Activated CD4-positive, alpha-beta T cell treated with anti-CD3 and anti-CD28 coated beads for 36 hours (primary cell): ENCODE measurements at regions of chr22 and their contacts with region 1.

Region 1: DNA sequence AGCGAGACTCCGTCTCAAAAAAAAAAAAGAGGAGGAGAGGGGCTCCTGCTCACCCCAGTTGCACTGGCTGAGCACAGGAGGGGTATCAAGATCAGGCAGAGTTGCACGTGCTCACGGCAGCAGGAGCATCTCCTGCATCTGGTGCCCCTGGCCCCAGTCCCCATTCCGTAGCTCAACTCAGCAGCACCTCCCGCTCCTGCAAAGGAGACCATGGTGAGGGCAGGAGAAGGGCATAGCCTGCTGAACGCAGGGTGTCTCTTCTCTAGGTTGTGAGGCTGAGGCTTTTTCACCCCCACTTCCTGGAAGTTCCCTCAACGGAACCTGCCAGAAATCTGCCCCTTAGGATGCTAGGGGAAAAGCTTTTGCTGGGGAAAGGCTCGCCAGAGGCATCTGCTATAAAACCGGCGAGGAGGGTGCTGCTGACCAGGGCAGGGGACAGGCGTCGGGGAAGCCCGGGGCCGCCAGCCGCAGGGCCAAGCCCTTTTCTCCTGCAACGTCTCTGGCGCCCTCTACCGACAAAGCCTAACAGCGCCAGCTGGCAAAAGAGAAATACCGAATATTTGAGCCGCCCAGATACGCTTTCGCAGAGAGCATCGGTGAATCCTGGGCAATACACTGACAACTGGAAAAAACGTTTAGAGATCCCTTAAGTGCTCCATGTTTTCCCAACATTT is 1.0 kb upstream of the PPP6R2 start:
- DNase-seq: peak; percentile 95
- ATAC-seq: peak; percentile 64
- H3K4me3 Mint-ChIP-seq: peak overlapping the region; percentile 71
- H3K27ac Mint-ChIP-seq: peak overlapping the region; percentile 83
- H3K4me1 Mint-ChIP-seq: peaks cover 7% of the 10 kb centered on the region
- H3K27me3 Mint-ChIP-seq: no peaks in the 10 kb centered on the region

Region 2: DNA sequence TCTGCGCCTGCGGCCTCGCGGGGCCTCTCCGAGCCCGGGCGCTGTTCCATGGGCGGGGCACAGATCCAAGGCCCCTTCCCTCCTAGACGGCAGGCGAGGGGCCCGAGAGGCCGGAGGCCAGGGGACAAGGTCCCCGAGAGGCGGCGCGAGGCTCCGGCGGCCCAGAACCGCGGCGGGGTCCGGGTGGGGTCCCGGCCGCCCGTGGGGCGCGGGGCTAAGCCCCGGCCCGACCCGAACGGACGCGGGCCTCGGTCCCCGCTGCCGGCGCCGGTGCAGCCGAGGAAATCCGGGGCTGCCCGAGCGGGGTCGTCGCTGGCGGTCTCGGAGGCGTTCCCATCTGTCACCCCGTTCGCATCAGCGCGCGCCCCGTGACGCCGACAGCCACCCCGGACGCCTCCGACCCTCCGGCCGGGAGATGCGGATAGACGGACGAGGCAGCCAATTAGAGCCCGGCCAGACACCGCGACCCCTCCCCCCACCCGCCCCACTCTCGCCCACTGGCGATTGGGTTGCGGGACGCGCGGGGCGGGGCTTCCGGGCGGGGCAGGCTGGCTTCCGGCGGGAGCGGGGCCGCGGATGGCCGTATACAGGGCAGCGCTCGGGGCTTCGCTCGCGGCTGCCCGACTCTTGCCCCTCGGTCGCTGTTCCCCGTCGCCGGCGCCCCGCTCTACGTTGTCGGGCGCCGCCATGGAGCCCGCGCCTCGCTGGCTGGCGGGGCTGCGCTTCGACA is 141.5 kb before region 1 on chr22 and contains the start of gene SELENOO:
- CTCF ChIA-PET with region 1: no interaction called
- POLR2A ChIA-PET with region 1: no interaction called
- intact Hi-C with region 1: loop called in 1 of 2 experiments (anchors 1 kb)
- DNase-seq: peak; percentile 94
- ATAC-seq: peak; percentile 91
- H3K4me3 Mint-ChIP-seq: peak within 1 kb of the TSS; percentile 79
- H3K27ac Mint-ChIP-seq: no peak within 1 kb of the TSS
- H3K4me1 Mint-ChIP-seq: peaks cover 23% of the 10 kb centered on the region
- H3K27me3 Mint-ChIP-seq: no peaks in the 10 kb centered on the region
- total RNA-seq, gene SELENOO: 14.4 to 18.3 TPM

Region 3: DNA sequence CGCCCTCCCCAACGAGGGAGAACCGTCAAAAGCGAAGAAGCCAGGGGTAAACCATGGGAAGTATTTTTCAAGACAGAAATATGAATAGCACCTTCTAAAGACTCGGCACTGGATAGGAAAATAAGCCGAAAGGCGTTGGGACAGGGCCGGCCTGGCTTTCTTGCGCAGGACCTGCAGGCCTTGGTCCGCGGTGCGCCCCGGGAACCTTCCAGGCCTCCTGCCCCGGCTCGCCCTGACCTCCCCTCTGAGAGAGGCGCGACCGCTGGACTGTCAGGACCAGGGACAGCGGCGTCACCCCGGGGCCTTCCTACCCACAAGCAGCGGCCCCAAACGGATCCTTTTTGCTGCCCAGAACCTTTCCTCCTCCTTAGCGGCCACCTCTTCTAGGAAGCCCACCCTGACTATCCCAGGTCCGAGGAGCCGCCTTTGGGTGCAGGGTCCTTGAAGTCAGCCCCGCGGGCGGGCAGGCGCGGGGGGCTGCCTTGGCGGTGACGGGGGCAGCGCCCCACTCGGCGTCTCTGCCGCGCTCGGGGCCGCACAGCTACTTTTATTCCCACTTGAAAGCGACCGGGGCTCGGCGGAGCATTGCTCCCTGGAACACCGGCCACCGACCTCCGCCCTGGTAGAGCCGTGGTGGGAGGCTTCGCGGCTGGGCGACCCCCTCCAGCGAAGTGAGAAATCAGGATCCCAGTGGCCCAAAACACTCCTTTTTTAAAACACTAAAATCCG is 71.3 kb before region 1 on chr22:
- CTCF ChIA-PET with region 1: interaction called, 16 read pairs
- POLR2A ChIA-PET with region 1: no interaction called
- intact Hi-C with region 1: loop called (anchors 1 kb)
- DNase-seq: peak; percentile 86
- ATAC-seq: peak; percentile 46
- H3K4me3 Mint-ChIP-seq: peak overlapping the region; percentile 65
- H3K27ac Mint-ChIP-seq: no peak overlapping the region
- H3K4me1 Mint-ChIP-seq: peaks cover 13% of the 10 kb centered on the region
- H3K27me3 Mint-ChIP-seq: peaks cover 4% of the 10 kb centered on the region

Region 4: DNA sequence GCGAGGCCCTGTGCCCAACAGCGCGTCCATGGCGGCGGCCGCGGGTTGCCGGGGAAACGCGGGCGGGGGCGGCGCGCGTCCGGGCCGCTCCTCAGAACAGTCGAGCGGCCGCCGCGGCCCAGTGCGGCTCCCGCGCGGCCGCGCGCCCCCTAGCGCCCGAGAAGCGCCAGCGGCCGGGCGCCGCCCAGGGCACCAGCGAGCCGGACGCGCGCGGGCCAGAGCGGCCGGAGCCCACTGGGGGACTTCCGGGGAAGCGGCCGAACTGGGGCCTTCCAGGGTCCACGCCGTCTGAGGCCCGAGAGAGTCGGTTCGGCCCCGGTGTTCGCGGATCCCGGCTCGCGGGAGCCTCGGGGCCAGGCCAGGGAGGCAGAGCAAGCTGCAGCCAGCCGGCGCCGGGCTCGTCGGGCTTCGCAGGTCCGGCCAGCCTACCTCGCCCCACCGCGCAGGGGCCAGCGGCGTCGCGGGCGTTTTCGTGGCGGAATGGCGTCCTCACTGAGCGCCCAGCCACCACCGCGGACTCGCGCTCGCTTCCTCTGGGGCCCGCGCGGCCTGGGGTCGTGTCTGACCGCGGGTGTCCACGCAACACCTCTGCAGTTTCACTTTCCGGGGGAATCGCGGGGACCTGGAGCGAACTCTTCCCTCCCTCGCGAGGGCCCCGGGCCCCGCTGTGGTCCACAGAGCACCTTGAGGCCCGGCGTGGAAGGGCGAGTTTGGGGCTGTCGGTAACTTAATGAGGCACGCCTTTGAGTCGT is 15.0 kb before region 1 on chr22 and contains the start of gene DENND6B:
- CTCF ChIA-PET with region 1: interaction called, 31 read pairs
- POLR2A ChIA-PET with region 1: no interaction called
- intact Hi-C with region 1: loop called in 1 of 2 experiments (anchors 1 kb)
- DNase-seq: peak; percentile 88
- ATAC-seq: peak; percentile 95
- H3K4me3 Mint-ChIP-seq: peak within 1 kb of the TSS; percentile 74
- H3K27ac Mint-ChIP-seq: peak within 1 kb of the TSS; percentile 63
- H3K4me1 Mint-ChIP-seq: peaks cover 14% of the 10 kb centered on the region
- H3K27me3 Mint-ChIP-seq: peaks cover 7% of the 10 kb centered on the region
- total RNA-seq, gene DENND6B: 2.8 TPM

Region 5: GRCh38 chr22:50367778-50368500 is 25.8 kb after region 1 on chr22:
- CTCF ChIA-PET with region 1: no interaction called
- POLR2A ChIA-PET with region 1: no interaction called
- intact Hi-C with region 1: no loop called
- DNase-seq: no peak
- ATAC-seq: no peak
- H3K4me3 Mint-ChIP-seq: no peak overlapping the region
- H3K27ac Mint-ChIP-seq: no peak overlapping the region
- H3K4me1 Mint-ChIP-seq: peaks cover 8% of the 10 kb centered on the region
- H3K27me3 Mint-ChIP-seq: no peaks in the 10 kb centered on the region

Region 6: DNA sequence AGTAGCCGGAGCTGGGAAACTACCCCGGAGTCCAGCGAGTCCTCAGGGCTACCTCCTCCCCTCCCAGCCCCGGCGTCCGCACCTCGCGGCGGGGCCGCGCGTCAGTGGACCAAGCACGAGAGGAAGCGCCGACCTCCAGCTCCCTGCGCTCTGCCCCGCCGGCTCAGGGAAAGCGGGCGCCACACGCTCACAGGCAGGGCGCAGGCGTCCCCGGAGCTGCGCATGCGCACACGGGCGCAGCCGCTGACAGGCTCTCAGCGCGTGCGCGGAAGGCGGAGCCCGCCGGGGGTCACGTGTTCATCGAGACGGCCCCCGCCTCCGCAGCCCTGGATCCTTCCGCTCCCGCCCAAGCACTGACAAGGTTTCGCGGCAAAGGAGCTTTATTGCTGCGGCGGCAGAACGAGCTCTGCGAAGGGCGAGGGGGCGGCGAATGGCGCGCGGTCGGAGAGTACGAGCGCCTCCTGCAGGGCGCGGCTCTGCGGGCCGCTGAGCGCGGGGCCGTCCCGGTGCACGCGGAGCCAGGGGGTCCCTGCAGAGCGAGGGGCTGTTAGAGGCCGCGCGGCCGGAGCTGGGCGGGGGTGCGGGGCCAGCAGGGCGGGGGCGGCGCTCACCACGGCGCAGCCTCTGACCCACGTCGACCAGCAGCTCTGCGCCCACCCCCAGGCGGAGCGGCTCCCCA is 183.4 kb after region 1 on chr22 and contains the start of gene SCO2:
- CTCF ChIA-PET with region 1: interaction called, 4 read pairs
- POLR2A ChIA-PET with region 1: no interaction called
- intact Hi-C with region 1: loop called in 1 of 2 experiments (anchors 5 kb)
- DNase-seq: peak; percentile 99
- ATAC-seq: peak; percentile 56
- H3K4me3 Mint-ChIP-seq: peak within 1 kb of the TSS; percentile 77
- H3K27ac Mint-ChIP-seq: peak within 1 kb of the TSS; percentile 87
- H3K4me1 Mint-ChIP-seq: peaks cover 34% of the 10 kb centered on the region
- H3K27me3 Mint-ChIP-seq: no peaks in the 10 kb centered on the region
- total RNA-seq, gene SCO2: 2.4 to 5.6 TPM

Region 7: DNA sequence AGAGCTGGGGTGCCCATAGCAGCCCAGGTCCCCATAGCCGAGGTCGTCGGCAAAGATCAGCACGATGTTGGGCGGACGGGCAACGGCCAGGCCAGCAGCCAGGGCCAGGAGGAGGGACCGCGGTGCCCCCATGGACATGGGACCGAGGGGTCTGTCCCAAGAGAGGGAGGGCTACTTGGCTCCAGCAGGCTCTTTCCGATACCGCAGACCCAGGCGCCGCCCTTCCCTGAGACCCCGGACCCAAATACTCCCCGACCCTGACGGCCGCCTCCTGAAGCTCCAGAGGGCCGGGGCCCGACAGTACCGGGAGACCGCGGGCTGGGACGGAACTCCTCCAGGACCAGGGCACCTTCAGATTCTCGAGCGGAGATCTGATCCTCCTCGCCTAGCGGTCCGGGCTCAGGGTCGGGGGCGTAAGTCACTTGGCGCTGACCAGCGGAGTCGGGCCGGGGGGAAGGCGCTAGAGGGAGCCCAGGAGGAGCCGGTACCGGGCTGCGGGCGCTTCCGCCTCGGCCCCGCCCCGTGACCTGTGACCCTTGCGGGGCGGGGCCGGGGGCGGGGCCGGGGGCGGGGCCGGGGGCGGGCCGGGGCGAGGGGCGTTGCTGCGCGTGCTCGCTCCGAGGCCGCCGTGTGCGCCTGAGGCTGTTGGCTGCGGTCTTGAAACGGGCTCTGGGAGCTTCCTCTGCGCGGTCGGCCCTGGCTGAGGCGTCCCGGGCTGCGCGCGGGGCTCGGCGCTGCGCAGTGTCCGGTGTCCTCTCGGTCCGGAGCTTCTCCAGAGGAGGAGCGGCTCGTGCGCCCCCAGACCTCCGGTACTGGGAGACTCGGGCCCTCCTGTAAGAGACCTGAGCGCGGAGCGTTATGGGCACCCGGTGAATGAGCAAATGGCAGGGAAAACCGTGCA is 285.8 kb after region 1 on chr22 and contains the start of gene ARSA:
- CTCF ChIA-PET with region 1: interaction called, 3 read pairs
- POLR2A ChIA-PET with region 1: no interaction called
- intact Hi-C with region 1: loop called (anchors 2 to 5 kb)
- DNase-seq: peak; percentile 87
- ATAC-seq: peak; percentile 94
- H3K4me3 Mint-ChIP-seq: peak within 1 kb of the TSS; percentile 76
- H3K27ac Mint-ChIP-seq: peak within 1 kb of the TSS; percentile 75
- H3K4me1 Mint-ChIP-seq: peaks cover 16% of the 10 kb centered on the region
- H3K27me3 Mint-ChIP-seq: no peaks in the 10 kb centered on the region
- total RNA-seq, gene ARSA: 14.9 to 15.4 TPM